ENCODE measurements at regions of chr16 and their contacts with region 1.

Region 1: GRCh38 chr16:25014500-25015147 is 545 bp downstream of the ARHGAP17 start:
- DNase-seq: peak; percentile 48
- ATAC-seq: peak; percentile 45
- H3K4me3 ChIP-seq: peak overlapping the region; percentile 90
- H3K27ac ChIP-seq: peak overlapping the region; percentile 98
- H3K4me1 ChIP-seq: peaks cover 24% of the 10 kb centered on the region
- H3K27me3 ChIP-seq: no peaks in the 10 kb centered on the region
- CTCF ChIP-seq: no peak
- POLR2A ChIP-seq: no peak
- RAD21 ChIP-seq: peak; percentile 3; the same call in 1 of the 2 replicates

Region 2: DNA sequence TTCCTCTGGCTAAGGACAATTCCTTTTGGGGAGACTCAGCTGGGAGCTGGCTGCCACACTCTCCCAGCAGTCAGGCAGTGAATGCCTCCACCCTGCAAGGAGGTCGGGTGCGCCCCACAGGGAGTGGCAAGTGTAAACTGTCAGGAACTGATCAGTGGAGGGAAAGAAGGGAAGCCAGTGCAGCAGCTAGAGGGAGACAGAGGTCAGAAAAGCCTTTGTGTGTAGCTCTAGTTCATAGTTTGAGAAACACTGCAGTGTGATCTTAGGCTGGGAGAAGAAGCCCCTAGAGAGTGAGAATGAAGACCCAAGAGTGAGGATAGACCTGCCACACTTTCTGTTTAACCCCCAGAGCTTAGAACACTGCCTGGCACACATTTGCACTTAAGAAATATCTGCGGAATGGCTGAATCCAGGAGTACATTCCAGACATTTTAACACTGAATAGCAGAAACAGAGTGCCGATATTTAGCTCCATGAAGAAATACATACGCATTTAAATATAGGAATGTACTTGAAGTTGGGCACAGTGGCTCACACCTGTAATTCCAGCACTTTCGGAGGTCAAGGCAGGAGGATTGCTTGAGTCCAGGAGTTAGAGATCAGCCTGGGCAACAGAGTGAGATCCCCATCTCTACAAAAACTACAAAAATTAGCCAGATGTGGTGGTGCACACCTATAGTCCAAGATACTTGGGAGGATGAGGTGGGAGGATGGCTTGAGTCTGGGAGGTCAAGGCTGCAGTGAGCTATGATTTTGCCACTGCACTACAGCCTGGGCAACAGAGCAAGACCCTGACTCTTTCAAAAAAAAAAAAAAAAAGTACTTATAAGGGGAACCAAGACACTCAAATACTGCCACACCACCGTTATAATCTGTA is 179.9 kb before region 1 on chr16:
- CTCF ChIA-PET with region 1: no interaction called
- POLR2A ChIA-PET with region 1: no interaction called
- dilution Hi-C with region 1: no loop called
- in situ Hi-C with region 1: no loop called
- intact Hi-C with region 1: no loop called
- DNase-seq: peak; percentile 49
- ATAC-seq: peak; percentile 79
- H3K4me3 ChIP-seq: no peak overlapping the region
- H3K27ac ChIP-seq: no peak overlapping the region
- H3K4me1 ChIP-seq: peaks cover 5% of the 10 kb centered on the region
- H3K27me3 ChIP-seq: no peaks in the 10 kb centered on the region
- CTCF ChIP-seq: peak; percentile 72
- POLR2A ChIP-seq: no peak
- RAD21 ChIP-seq: peak; percentile 75

Region 3: GRCh38 chr16:24906199-24907020 is 108.2 kb before region 1 on chr16:
- CTCF ChIA-PET with region 1: no interaction called
- POLR2A ChIA-PET with region 1: interaction called, 10 read pairs
- dilution Hi-C with region 1: no loop called
- in situ Hi-C with region 1: no loop called
- intact Hi-C with region 1: no loop called
- DNase-seq: peak; percentile 26
- ATAC-seq: peak; percentile 29
- H3K4me3 ChIP-seq: no peak overlapping the region
- H3K27ac ChIP-seq: no peak overlapping the region
- H3K4me1 ChIP-seq: no peaks in the 10 kb centered on the region
- H3K27me3 ChIP-seq: no peaks in the 10 kb centered on the region; the same call in 1 of the 2 replicates
- CTCF ChIP-seq: peak; percentile 48
- POLR2A ChIP-seq: no peak
- RAD21 ChIP-seq: peak; percentile 41; the same call in 1 of the 2 replicates

Measured in IMR-90 (cell line).